ENCODE measurements at regions of chr6 and their contacts with region 1.

Region 1: GRCh38 chr6:30130887-30131862 is 4.8 kb upstream of the TRIM40 start:
- DNase-seq: peak; percentile 50 to 82 (median 74)
- H3K4me3 ChIP-seq: no peak overlapping the region
- H3K4me3 Mint-ChIP-seq: peak overlapping the region in 1 of 7 donors; percentile 21
- H3K27ac ChIP-seq: no peak overlapping the region
- H3K27ac Mint-ChIP-seq: peak overlapping the region in 1 of 8 donors; percentile 48
- H3K4me1 ChIP-seq: peaks cover 7% of the 10 kb centered on the region
- H3K4me1 Mint-ChIP-seq: peaks cover 3 to 15% (median 4%) of the 10 kb centered on the region in 3 donors
- H3K27me3 ChIP-seq: peaks cover 16% of the 10 kb centered on the region
- H3K27me3 Mint-ChIP-seq: peaks cover 34 to 79% of the 10 kb centered on the region in 2 donors

Region 2: GRCh38 chr6:30066577-30067459 is 64.4 kb before region 1 on chr6 and contains the start of gene PPP1R11:
- CTCF ChIA-PET with region 1: no interaction called
- POLR2A ChIA-PET with region 1: no interaction called
- DNase-seq: peak; percentile 98 to 100 (median 99)
- H3K4me3 ChIP-seq: peak within 1 kb of the TSS; percentile 95
- H3K4me3 Mint-ChIP-seq: peak within 1 kb of the TSS; percentile 89 to 97 (median 92)
- H3K27ac ChIP-seq: peak within 1 kb of the TSS; percentile 98
- H3K27ac Mint-ChIP-seq: peak within 1 kb of the TSS; percentile 91 to 100 (median 98)
- H3K4me1 ChIP-seq: peaks cover 44% of the 10 kb centered on the region
- H3K4me1 Mint-ChIP-seq: peaks cover 56 to 77% (median 71%) of the 10 kb centered on the region in 3 donors
- H3K27me3 ChIP-seq: no peaks in the 10 kb centered on the region
- H3K27me3 Mint-ChIP-seq: peaks cover 10 to 15% of the 10 kb centered on the region in 2 donors
- total RNA-seq, gene PPP1R11: 67.1 to 70.9 TPM

Region 3: GRCh38 chr6:30092852-30093543 is 38.2 kb before region 1 on chr6:
- CTCF ChIA-PET with region 1: interaction called, 13 read pairs
- POLR2A ChIA-PET with region 1: no interaction called
- DNase-seq: no peak
- H3K4me3 ChIP-seq: no peak overlapping the region
- H3K4me3 Mint-ChIP-seq: no peak overlapping the region
- H3K27ac ChIP-seq: no peak overlapping the region
- H3K27ac Mint-ChIP-seq: peak overlapping the region in 2 of 8 donors; percentile 19 to 23
- H3K4me1 ChIP-seq: peaks cover 6% of the 10 kb centered on the region
- H3K4me1 Mint-ChIP-seq: peaks cover 7 to 10% (median 8%) of the 10 kb centered on the region in 3 donors
- H3K27me3 ChIP-seq: peaks cover 11% of the 10 kb centered on the region
- H3K27me3 Mint-ChIP-seq: peaks cover 51 to 90% of the 10 kb centered on the region in 2 donors